Upper lobe of right lung (tissue), 1 donor: ENCODE measurements at regions of chr4 and their contacts with region 1.

Region 1: GRCh38 chr4:184168406-184169019 is 49.2 kb downstream of the ENPP6 start:
- DNase-seq: peak; percentile 87
- ATAC-seq: peak; percentile 96
- H3K4me3 ChIP-seq: no peak overlapping the region
- H3K27ac ChIP-seq: no peak overlapping the region
- H3K4me1 ChIP-seq: peaks cover 3% of the 10 kb centered on the region
- H3K27me3 ChIP-seq: peaks cover 9% of the 10 kb centered on the region
- CTCF ChIP-seq: peak; percentile 95

Region 2: GRCh38 chr4:183840311-183840710 is 328.2 kb before region 1 on chr4:
- intact Hi-C with region 1: loop called (anchors 5 kb)
- DNase-seq: peak; percentile 84
- ATAC-seq: peak; percentile 93
- H3K4me3 ChIP-seq: no peak overlapping the region
- H3K27ac ChIP-seq: no peak overlapping the region
- H3K4me1 ChIP-seq: no peaks in the 10 kb centered on the region
- H3K27me3 ChIP-seq: no peaks in the 10 kb centered on the region
- CTCF ChIP-seq: peak; percentile 90

Region 3: GRCh38 chr4:184287697-184288255 is 119.3 kb after region 1 on chr4:
- intact Hi-C with region 1: no loop called
- DNase-seq: no peak
- ATAC-seq: peak; percentile 85
- H3K4me3 ChIP-seq: no peak overlapping the region
- H3K27ac ChIP-seq: peak overlapping the region; percentile 65
- H3K4me1 ChIP-seq: peaks cover 15% of the 10 kb centered on the region
- H3K27me3 ChIP-seq: no peaks in the 10 kb centered on the region
- CTCF ChIP-seq: peak; percentile 29